WTC11 (cell line): ENCODE measurements at regions of chr2 and their contacts with region 1.

Region 1: DNA sequence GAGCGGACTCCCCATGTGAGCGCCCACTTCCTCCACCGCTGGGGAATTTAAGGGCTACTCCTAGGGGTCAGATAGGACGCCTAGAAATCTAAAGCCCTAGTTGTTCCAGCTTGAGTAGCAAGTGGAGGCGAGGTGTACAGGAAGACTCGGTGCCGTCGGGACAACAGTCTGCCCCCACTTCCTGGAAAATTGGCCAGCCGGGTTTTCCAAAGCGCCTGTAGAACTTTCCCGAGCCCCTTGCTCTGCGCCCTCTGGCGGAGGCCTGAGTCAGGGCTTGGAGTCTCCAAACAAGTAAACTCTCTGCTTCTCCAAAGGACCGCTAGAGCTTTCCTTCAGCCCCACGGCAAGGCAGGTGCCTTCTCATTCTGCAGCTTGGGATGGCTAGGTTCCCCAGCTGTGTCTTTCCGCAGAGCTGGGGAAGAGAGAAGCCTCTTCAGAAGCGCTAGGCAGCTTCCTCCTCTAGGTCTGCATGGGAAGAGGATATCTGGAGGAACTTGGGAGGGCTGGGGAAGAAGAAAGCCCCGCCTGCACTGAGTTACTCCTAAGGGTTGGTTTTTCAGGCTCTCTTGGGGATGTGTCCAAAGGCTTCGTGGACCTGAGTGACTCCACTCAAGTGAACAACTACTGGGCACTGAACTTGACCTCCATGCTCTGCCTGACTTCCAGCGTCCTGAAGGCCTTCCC is 688 bp downstream of the SPR start:
- DNase-seq: peak; percentile 97
- ATAC-seq: peak; percentile 68
- H3K4me3 Mint-ChIP-seq: peak overlapping the region; percentile 67
- H3K27ac Mint-ChIP-seq: no peak overlapping the region
- H3K4me1 Mint-ChIP-seq: peaks cover 18% of the 10 kb centered on the region
- H3K27me3 Mint-ChIP-seq: peaks cover 58% of the 10 kb centered on the region
- CTCF ChIP-seq: peak; percentile 82

Region 2: DNA sequence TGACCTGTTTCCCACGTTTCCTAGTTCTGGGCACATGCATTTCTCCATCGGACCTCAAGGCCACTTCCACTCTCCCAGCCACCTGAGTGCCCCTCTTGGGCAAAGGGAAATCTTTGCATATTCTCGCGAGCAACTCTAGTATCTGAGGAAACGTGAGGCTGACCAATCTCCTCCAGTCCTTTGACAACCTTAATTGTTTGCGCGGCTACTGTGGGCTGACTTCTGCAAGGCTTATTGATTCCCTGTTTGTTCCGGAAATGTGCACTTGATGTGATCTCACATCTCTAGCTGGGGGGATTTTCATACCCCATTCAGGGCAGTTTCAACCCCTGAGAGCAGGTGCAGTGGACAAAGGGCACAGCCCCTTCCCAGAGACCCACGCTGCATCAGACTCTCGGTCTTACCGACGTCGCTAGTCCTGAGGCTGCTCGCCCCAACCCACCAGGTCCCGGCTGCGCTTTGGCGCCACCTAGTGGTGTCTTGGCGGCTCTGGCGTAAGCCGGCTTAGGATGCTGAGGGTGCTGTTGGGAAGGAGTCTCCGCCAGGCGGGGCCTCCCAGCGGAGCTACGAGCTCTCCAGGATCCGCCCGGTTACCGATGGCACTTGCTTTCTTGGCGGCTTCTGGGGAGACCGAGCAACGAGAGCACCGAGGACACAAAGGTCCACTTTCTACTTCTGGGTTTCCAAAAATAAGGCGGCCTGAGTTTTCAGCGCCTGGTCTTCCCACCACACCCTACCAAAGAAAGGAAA is 25.5 kb before region 1 on chr2:
- CTCF ChIA-PET with region 1: interaction called, 54 read pairs
- POLR2A ChIA-PET with region 1: no interaction called
- DNase-seq: peak; percentile 96
- ATAC-seq: peak; percentile 92
- H3K4me3 Mint-ChIP-seq: peak overlapping the region; percentile 73
- H3K27ac Mint-ChIP-seq: no peak overlapping the region
- H3K4me1 Mint-ChIP-seq: peaks cover 20% of the 10 kb centered on the region
- H3K27me3 Mint-ChIP-seq: peaks cover 16% of the 10 kb centered on the region
- CTCF ChIP-seq: peak; percentile 98

Region 3: GRCh38 chr2:72908741-72909140 is 20.8 kb after region 1 on chr2:
- CTCF ChIA-PET with region 1: interaction called, 165 read pairs
- POLR2A ChIA-PET with region 1: no interaction called
- DNase-seq: no peak
- ATAC-seq: no peak
- H3K4me3 Mint-ChIP-seq: no peak overlapping the region
- H3K27ac Mint-ChIP-seq: no peak overlapping the region
- H3K4me1 Mint-ChIP-seq: peaks cover 6% of the 10 kb centered on the region
- H3K27me3 Mint-ChIP-seq: peaks cover 96% of the 10 kb centered on the region
- CTCF ChIP-seq: no peak

Region 4: GRCh38 chr2:72934683-72935610 is 47.1 kb after region 1 on chr2:
- CTCF ChIA-PET with region 1: interaction called, 218 read pairs
- POLR2A ChIA-PET with region 1: no interaction called
- DNase-seq: peak; percentile 54
- ATAC-seq: peak; percentile 53
- H3K4me3 Mint-ChIP-seq: no peak overlapping the region
- H3K27ac Mint-ChIP-seq: no peak overlapping the region
- H3K4me1 Mint-ChIP-seq: peaks cover 39% of the 10 kb centered on the region
- H3K27me3 Mint-ChIP-seq: peaks cover 52% of the 10 kb centered on the region
- CTCF ChIP-seq: no peak; the same call in 1 of the 2 replicates

Region 5: GRCh38 chr2:72973566-72974435 is 85.9 kb after region 1 on chr2:
- CTCF ChIA-PET with region 1: interaction called, 175 read pairs
- POLR2A ChIA-PET with region 1: no interaction called
- DNase-seq: peak; percentile 78
- ATAC-seq: peak; percentile 95
- H3K4me3 Mint-ChIP-seq: no peak overlapping the region
- H3K27ac Mint-ChIP-seq: no peak overlapping the region
- H3K4me1 Mint-ChIP-seq: peaks cover 46% of the 10 kb centered on the region
- H3K27me3 Mint-ChIP-seq: no peaks in the 10 kb centered on the region
- CTCF ChIP-seq: peak; percentile 81

Region 6: GRCh38 chr2:73085691-73086360 is 197.9 kb after region 1 on chr2:
- CTCF ChIA-PET with region 1: interaction called, 25 read pairs
- POLR2A ChIA-PET with region 1: no interaction called
- DNase-seq: peak; percentile 95
- ATAC-seq: peak; percentile 80
- H3K4me3 Mint-ChIP-seq: no peak overlapping the region
- H3K27ac Mint-ChIP-seq: no peak overlapping the region
- H3K4me1 Mint-ChIP-seq: peaks cover 18% of the 10 kb centered on the region
- H3K27me3 Mint-ChIP-seq: no peaks in the 10 kb centered on the region
- CTCF ChIP-seq: peak; percentile 81

Region 7: GRCh38 chr2:73451263-73451972 is 563.5 kb after region 1 on chr2:
- CTCF ChIA-PET with region 1: no interaction called
- POLR2A ChIA-PET with region 1: no interaction called
- DNase-seq: no peak
- ATAC-seq: no peak
- H3K4me3 Mint-ChIP-seq: no peak overlapping the region
- H3K27ac Mint-ChIP-seq: no peak overlapping the region
- H3K4me1 Mint-ChIP-seq: no peaks in the 10 kb centered on the region
- H3K27me3 Mint-ChIP-seq: no peaks in the 10 kb centered on the region
- CTCF ChIP-seq: no peak